ENCODE measurements at regions of chr4 and their contacts with region 1.

Region 1: GRCh38 chr4:118684873-118685811 is at the start of gene METTL14:
- DNase-seq: peak; percentile 88
- CTCF ChIP-seq: no peak

Region 2: GRCh38 chr4:118249890-118250289 is 435.3 kb before region 1 on chr4:
- in situ Hi-C with region 1: no loop called
- DNase-seq: no peak
- CTCF ChIP-seq: no peak

Region 3: DNA sequence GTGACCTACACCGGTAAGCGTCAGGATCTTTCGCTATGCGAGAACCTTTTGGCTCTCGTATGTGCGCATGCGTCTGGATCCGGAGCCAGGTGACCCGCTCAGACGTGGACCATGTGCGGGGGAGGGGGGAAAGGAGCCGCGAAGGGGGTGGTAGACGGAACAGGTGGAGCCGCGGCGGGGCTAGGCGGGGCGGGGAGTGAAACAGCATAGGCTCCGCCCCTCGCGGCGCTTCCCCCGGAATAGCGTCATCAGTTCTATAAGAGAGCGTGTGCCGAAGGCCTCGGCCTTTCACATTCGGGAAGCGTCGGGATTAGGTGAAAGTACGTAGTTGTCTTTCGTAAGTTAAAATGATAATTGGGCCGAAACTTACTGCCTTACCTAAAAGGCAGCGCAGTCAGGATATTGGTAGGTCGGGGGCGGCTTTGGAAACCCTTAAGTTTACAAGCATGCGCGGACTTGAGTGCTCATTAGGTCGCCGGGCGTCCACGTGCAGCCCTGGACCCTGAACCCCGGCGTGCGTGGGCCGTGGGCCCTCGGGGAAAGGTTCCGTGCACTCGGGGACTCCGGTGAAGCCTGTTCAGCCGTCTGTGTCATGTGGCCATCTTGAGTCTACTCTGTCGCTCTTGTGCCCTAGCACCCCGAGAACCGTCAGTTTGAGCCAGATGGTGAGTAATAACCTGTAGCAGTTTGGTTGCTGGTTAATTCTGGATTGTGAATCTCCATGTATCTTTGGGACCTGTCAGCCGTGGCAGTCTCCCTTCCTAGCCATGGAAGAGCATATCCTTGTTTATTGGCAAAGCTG is 406.5 kb before region 1 on chr4:
- in situ Hi-C with region 1: loop called (anchors 25 kb)
- DNase-seq: peak; percentile 96
- CTCF ChIP-seq: no peak

Measured in GM13976 (cell line).